ENCODE measurements at regions of chr12 and their contacts with region 1.

Region 1: GRCh38 chr12:57904848-57905811 is 36.2 kb upstream of the ATP23 start:
- DNase-seq: peak; percentile 95
- ATAC-seq: peak; percentile 98
- H3K4me3 ChIP-seq: no peak overlapping the region
- H3K27ac ChIP-seq: no peak overlapping the region
- H3K4me1 ChIP-seq: peaks cover 7% of the 10 kb centered on the region; the same call in 1 of the 2 replicates
- H3K27me3 ChIP-seq: no peaks in the 10 kb centered on the region
- CTCF ChIP-seq: peak; percentile 100

Region 2: DNA sequence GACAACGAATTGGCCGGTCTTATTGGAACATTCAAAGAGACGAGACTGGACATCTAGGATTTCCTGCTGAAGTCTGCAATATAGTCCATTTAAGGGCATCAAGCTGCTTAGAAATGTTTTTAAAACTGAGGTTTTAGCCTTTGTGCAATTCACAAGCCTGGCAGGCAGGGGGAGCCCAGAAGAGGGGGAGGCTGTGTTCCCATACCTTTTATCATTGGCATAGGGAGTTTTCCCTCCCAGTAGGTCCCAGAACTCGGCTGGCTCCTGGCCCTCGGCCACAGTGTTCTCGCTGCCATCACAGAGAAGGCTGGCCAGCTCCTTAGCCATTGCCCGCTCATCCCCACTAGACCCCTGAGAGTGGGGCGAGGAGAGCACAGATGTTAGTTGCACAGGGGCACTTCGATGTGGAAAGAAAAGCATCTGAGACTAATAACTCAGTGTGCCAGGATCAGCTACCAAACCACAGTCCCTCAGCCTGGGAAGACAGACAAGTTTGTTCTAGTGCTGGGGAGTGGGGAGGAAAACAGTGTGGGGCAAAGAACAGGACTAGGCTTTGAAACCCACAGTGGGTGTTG is 101.7 kb before region 1 on chr12:
- CTCF ChIA-PET with region 1: no interaction called
- POLR2A ChIA-PET with region 1: no interaction called
- intact Hi-C with region 1: loop called (anchors 1 kb)
- DNase-seq: peak; percentile 60
- ATAC-seq: peak; percentile 60
- H3K4me3 ChIP-seq: no peak overlapping the region
- H3K27ac ChIP-seq: no peak overlapping the region
- H3K4me1 ChIP-seq: no peaks in the 10 kb centered on the region
- H3K27me3 ChIP-seq: no peaks in the 10 kb centered on the region
- CTCF ChIP-seq: peak; percentile 82

Region 3: DNA sequence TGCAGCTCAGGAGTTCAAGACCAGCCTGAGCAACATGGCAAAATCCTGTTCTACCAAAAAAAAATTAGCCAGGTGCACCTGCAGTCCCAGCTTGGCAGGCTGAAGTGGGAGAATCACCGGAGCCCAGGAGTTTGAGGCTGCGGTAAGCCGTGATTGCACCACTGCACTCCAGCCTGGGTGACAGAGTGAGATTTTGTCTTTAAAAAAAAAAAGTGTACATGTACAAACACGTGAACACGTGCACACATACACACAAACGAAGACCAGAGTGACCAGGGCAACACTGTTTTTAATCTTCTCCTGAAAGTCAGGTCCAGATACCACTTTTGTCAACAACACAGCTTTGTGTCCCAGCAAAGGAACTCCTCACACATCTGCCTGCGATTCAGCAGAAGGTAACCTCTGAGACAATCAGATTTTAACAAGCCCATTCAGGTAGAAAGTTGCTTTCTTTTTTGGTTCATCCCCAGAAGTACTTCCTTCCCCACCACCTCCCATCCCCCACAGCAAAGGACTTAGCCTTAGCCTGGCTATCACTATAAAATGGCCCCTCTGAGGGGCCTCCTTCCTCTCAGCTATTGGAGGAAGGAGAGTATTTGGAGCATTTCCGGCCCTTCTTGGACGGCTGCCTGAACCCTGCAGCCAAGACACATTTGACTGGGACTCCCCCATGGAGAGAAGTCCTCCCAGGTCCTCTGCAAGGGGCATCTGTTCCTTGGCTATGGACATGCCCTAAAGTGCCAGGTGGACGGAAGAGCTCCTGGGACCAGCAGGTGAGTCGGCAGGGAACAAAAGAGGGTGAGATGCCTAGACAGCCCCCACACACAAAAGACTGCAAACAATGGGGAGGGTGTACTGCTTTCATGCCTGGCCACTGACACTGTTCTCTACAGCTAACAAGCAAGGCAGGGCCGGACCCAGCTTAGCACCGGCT is 68.4 kb before region 1 on chr12:
- CTCF ChIA-PET with region 1: interaction called, 4 read pairs
- POLR2A ChIA-PET with region 1: no interaction called
- intact Hi-C with region 1: loop called (anchors 1 kb)
- DNase-seq: peak; percentile 25
- ATAC-seq: peak; percentile 31; the same call in 1 of the 2 replicates
- H3K4me3 ChIP-seq: no peak overlapping the region
- H3K27ac ChIP-seq: no peak overlapping the region
- H3K4me1 ChIP-seq: peaks cover 17% of the 10 kb centered on the region; the same call in 1 of the 2 replicates
- H3K27me3 ChIP-seq: no peaks in the 10 kb centered on the region
- CTCF ChIP-seq: no peak

Region 4: DNA sequence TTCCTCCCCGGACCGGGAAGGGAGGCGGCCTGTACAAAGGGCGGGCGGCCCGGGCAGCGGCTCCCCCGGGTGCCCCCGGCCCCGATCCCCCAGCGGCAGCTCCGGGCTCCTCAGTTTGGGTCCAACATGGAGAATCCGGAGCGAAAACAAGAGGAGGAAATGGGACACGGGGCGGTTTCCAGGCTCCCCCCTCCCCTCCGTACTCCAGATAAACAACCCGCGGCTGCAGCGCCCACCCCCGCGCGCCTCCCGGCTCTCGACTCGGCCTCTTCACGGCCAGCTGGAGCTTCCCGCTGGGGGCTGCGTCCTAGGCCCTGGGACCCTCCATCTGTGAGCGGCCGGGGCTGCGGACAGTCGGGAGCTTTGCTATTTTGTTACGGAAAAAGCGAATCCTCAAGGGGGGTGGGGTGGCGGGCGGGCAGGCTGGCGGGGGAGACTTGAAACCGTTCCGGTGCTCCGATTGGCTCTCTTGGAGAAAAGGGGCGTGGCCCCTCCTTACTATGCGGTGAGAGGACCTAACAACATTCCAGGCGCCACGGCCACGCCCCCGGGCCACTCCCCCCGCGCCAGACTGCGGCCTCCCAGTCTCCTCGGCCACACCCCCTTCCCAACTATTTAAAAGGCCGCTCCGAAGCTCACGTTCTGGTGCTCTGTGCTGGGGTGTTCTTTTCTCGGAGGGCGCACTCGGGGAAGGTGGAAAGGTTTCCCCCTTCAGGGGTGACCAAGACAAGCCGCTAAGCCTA is 58.4 kb before region 1 on chr12 and contains the start of gene CTDSP2:
- CTCF ChIA-PET with region 1: interaction called, 15 read pairs
- POLR2A ChIA-PET with region 1: no interaction called
- intact Hi-C with region 1: loop called (anchors 1 kb)
- DNase-seq: peak; percentile 97
- ATAC-seq: peak; percentile 71
- H3K4me3 ChIP-seq: peak within 1 kb of the TSS; percentile 99
- H3K27ac ChIP-seq: peak within 1 kb of the TSS; percentile 56
- H3K4me1 ChIP-seq: peaks cover 6% of the 10 kb centered on the region; the same call in 1 of the 2 replicates
- H3K27me3 ChIP-seq: no peaks in the 10 kb centered on the region
- CTCF ChIP-seq: no peak
- total RNA-seq, gene CTDSP2: 37.4 and 39.4 TPM in 2 replicates

Region 5: GRCh38 chr12:57865090-57865751 is 39.9 kb before region 1 on chr12:
- CTCF ChIA-PET with region 1: no interaction called
- POLR2A ChIA-PET with region 1: interaction called, 4 read pairs
- intact Hi-C with region 1: loop called (anchors 2 kb)
- DNase-seq: peak; percentile 77
- ATAC-seq: peak; percentile 87
- H3K4me3 ChIP-seq: peak overlapping the region; percentile 83
- H3K27ac ChIP-seq: peak overlapping the region; percentile 80
- H3K4me1 ChIP-seq: peaks cover 26% of the 10 kb centered on the region
- H3K27me3 ChIP-seq: no peaks in the 10 kb centered on the region
- CTCF ChIP-seq: no peak